GM13976 (cell line): ENCODE measurements at regions of chr5 and their contacts with region 1.

Region 1: DNA sequence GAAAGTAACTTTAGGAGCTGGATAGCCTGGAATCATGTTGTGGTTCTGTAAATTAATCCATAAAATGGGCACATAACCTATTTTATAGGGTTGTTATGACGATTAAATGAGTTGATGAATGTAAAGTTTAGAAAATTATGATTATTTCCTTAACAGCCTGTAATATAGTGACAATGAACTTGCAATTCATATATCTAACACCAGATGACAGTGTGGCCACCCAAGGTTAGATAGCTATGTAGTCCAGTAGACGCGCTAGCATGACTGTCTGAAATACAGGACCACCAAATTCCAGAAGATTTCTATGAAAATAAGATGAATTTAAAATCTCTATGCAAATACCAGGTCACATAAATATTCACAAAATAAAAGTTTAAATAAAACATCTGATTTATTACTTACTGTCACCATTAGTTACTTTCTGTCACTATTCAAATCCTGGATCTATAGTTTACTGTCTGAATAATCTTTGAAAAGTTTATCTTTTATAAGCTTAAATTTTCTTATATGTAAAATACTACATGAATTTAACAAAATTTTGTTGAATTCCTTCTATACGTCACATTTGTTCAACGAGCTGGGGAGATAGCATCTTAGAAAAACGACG is 26.1 kb upstream of the MACIR start:
- DNase-seq: no peak
- CTCF ChIP-seq: peak; percentile 48

Region 2: GRCh38 chr5:103433211-103433610 is 200.7 kb after region 1 on chr5:
- in situ Hi-C with region 1: no loop called
- DNase-seq: no peak
- CTCF ChIP-seq: no peak

Region 3: DNA sequence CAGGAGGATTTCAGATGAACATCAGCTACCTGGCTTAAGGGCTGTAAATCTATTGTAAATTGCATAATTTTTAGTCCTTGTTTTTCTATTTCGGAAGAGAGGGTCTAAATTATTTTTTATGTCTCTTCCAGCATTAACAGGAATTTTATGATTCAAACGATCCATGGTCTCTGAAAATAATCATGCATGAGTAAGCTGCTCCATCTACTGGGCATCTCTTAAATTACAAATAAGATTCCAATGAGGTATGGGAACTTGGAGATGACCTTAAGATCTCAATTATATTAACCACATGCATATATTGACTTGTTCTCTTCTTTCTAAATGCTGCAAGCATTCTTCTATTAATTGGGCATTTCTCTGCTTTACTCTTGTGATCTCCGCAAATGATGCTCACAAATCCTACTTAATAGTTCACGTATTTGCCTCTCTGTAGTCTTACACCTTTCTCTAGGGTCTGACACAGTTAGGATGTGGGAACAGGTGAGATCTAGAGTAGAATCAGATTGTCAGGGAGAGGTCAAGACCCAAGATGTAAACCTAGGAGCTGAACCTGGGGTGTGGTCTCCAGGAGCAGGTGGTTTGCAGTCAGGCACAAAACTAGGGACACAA is 243.2 kb after region 1 on chr5:
- in situ Hi-C with region 1: loop called (anchors 5 kb)
- DNase-seq: peak; percentile 7
- CTCF ChIP-seq: no peak